Lower lobe of right lung (tissue), 2 donors: ENCODE measurements at regions of chr4 and their contacts with region 1.

Region 1: DNA sequence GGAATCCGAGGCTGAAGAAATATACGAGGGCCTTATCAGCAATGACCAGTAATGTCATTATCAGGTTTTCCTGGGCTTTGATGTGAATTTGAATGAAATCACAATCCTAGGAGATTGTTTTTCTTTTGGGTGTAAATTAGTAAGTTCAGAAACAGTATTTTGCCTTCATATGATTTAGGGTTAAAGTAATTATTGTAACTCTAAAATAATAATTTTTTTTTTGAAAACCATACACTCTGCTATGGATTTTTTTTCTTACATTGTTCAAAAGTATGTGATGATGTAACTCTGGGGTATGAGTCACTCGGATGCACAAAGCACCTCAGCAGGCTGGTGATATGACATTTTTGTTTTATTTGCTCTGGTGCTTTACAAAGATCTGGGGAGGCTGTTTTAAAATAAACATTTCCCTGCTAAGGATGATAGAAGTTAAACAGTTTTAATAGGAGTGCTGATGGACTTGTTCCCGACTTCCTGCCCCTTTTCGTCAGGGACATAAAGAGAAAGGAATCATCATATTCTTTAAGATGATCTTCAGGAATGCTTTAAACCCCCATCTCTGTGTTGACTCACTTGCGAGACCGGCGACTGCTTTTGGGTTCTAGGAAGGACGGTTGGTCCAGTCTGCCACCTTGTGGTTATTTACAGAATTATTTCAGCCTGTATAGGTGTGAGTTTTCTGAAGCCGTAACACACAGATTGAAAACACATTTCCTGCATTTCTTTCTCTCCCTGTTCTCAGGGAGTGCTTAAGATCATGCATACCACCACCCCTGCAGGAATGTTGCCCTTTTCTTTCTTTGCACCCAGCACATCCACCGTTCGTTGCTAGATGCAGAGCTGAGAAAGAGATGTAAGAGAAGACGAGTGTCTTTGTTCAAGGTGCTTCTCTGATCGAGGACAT is 72.5 kb downstream of the RAPGEF2 start:
- DNase-seq: peak; percentile 51
- ATAC-seq: peak; percentile 89 to 91
- H3K4me3 ChIP-seq: no peak overlapping the region
- H3K27ac ChIP-seq: peak overlapping the region; percentile 26
- H3K4me1 ChIP-seq: peaks cover 94% of the 10 kb centered on the region
- H3K27me3 ChIP-seq: no peaks in the 10 kb centered on the region
- CTCF ChIP-seq: peak; percentile 80

Region 2: DNA sequence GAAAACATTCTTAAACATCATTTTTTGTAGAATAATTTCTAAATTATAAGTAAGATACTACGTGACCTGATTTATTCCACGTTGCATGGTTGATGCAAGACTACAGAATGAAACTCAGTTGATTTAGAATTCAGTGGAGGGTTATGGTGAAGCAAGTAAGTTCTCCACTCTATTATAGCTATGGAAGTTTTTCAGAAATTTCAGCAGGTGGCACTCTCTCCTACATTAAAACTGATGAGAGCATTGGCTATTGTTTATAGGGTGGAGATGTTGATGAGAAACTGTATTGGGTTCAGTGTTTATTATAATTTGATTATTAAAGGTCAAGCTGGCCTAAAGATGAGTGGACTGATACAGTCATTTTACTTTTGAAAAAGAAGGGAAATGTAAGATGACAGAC is 318.5 kb before region 1 on chr4:
- intact Hi-C with region 1: loop called (anchors 10 kb)
- DNase-seq: no peak
- ATAC-seq: peak; percentile 58 to 74
- H3K4me3 ChIP-seq: no peak overlapping the region
- H3K27ac ChIP-seq: no peak overlapping the region
- H3K4me1 ChIP-seq: no peaks in the 10 kb centered on the region
- H3K27me3 ChIP-seq: no peaks in the 10 kb centered on the region
- CTCF ChIP-seq: peak; percentile 53